Activated naive CD4-positive, alpha-beta T cell treated with anti-CD3 and anti-CD28 coated beads for 36 hours (primary cell): ENCODE measurements at regions of chr21 and their contacts with region 1.

Region 1: GRCh38 chr21:36113647-36114428 is 21.0 kb upstream of the CBR3 start:
- DNase-seq: peak; percentile 33
- H3K4me3 Mint-ChIP-seq: peak overlapping the region; percentile 76
- H3K27ac Mint-ChIP-seq: peak overlapping the region; percentile 51
- H3K4me1 Mint-ChIP-seq: peaks cover 21% of the 10 kb centered on the region
- H3K27me3 Mint-ChIP-seq: no peaks in the 10 kb centered on the region

Region 2: GRCh38 chr21:36125512-36126222 is 11.8 kb after region 1 on chr21:
- CTCF ChIA-PET with region 1: interaction called, 6 read pairs
- intact Hi-C with region 1: loop called (anchors 1 kb)
- DNase-seq: peak; percentile 74
- H3K4me3 Mint-ChIP-seq: no peak overlapping the region
- H3K27ac Mint-ChIP-seq: no peak overlapping the region
- H3K4me1 Mint-ChIP-seq: peaks cover 8% of the 10 kb centered on the region
- H3K27me3 Mint-ChIP-seq: no peaks in the 10 kb centered on the region

Region 3: DNA sequence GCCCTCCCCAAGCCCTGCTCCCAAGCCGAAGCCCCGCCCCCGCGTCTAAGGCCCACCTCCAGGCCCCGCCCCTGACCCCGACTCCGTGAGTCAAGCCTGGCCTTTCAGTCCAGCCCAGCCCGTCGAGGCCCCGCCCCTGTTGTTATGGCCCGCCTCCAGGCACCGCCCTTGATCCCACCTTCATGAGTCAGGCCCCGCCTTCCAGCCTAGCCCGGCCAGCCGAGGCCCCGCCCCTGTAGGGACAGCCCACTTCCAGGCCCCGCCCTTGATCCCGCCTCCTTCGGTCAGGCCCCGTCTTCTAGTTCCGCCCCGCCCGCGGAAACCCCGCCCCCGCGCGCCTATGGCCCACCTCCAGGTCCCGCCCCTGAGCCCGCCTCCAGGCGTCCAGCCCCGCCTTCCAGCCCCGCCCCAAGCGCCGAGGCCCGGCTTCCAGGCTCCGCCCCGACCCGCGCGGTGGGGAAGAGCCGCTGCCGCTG is 42.5 kb after region 1 on chr21:
- CTCF ChIA-PET with region 1: no interaction called
- intact Hi-C with region 1: no loop called
- DNase-seq: peak; percentile 100
- H3K4me3 Mint-ChIP-seq: peak overlapping the region; percentile 80
- H3K27ac Mint-ChIP-seq: no peak overlapping the region
- H3K4me1 Mint-ChIP-seq: peaks cover 13% of the 10 kb centered on the region
- H3K27me3 Mint-ChIP-seq: no peaks in the 10 kb centered on the region

Region 4: DNA sequence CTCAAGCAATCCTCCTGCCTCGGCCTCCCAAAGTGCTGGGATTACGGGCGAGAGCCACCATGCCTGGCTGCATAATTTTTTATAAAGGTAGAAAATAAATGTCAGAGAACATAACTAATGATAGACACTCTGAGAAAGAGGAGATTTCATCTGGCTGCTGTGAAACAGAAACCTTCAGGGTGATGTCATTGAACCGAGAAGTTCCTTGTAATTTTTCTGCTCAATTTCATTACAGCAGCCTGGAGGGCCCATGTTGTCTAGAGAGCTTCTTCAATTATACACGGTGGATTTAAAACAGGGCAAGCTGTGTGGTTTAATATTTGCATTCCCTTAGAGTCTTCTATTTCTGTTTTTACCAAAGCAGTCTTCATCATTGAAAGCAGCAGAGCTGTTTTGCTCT is 141.8 kb after region 1 on chr21:
- CTCF ChIA-PET with region 1: no interaction called
- intact Hi-C with region 1: no loop called
- DNase-seq: no peak
- H3K4me3 Mint-ChIP-seq: no peak overlapping the region
- H3K27ac Mint-ChIP-seq: no peak overlapping the region
- H3K4me1 Mint-ChIP-seq: peaks cover 24% of the 10 kb centered on the region
- H3K27me3 Mint-ChIP-seq: no peaks in the 10 kb centered on the region